Calu3 (cell line): ENCODE measurements at regions of chr16 and their contacts with region 1.

Region 1: GRCh38 chr16:69123910-69124309 is 8.5 kb downstream of the CHTF8 start:
- DNase-seq: peak; percentile 70
- H3K4me3 Mint-ChIP-seq: no peak overlapping the region
- H3K27ac Mint-ChIP-seq: no peak overlapping the region
- H3K4me1 Mint-ChIP-seq: no peaks in the 10 kb centered on the region
- H3K27me3 Mint-ChIP-seq: no peaks in the 10 kb centered on the region
- CTCF ChIP-seq: peak; percentile 83

Region 2: GRCh38 chr16:68528686-68529379 is 595.1 kb before region 1 on chr16:
- CTCF ChIA-PET with region 1: interaction called, 4 read pairs
- intact Hi-C with region 1: loop called (anchors 10 kb)
- DNase-seq: peak; percentile 91
- H3K4me3 Mint-ChIP-seq: peak overlapping the region; percentile 99
- H3K27ac Mint-ChIP-seq: peak overlapping the region; percentile 54
- H3K4me1 Mint-ChIP-seq: peaks cover 28% of the 10 kb centered on the region
- H3K27me3 Mint-ChIP-seq: no peaks in the 10 kb centered on the region
- CTCF ChIP-seq: peak; percentile 95

Region 3: GRCh38 chr16:68843482-68844210 is 280.3 kb before region 1 on chr16 and contains the start of gene TANGO6:
- CTCF ChIA-PET with region 1: interaction called, 9 read pairs
- intact Hi-C with region 1: loop called (anchors 1 kb)
- DNase-seq: peak; percentile 92
- H3K4me3 Mint-ChIP-seq: peak within 1 kb of the TSS; percentile 69
- H3K27ac Mint-ChIP-seq: peak within 1 kb of the TSS; percentile 27
- H3K4me1 Mint-ChIP-seq: peaks cover 8% of the 10 kb centered on the region
- H3K27me3 Mint-ChIP-seq: no peaks in the 10 kb centered on the region
- CTCF ChIP-seq: peak; percentile 21
- total RNA-seq, gene TANGO6: 18.0 TPM in 2 replicates

Region 4: GRCh38 chr16:68902008-68902968 is 221.6 kb before region 1 on chr16:
- CTCF ChIA-PET with region 1: interaction called, 5 read pairs
- intact Hi-C with region 1: loop called (anchors 1 kb)
- DNase-seq: peak; percentile 76
- H3K4me3 Mint-ChIP-seq: no peak overlapping the region
- H3K27ac Mint-ChIP-seq: no peak overlapping the region
- H3K4me1 Mint-ChIP-seq: peaks cover 10% of the 10 kb centered on the region
- H3K27me3 Mint-ChIP-seq: no peaks in the 10 kb centered on the region
- CTCF ChIP-seq: peak; percentile 82

Region 5: DNA sequence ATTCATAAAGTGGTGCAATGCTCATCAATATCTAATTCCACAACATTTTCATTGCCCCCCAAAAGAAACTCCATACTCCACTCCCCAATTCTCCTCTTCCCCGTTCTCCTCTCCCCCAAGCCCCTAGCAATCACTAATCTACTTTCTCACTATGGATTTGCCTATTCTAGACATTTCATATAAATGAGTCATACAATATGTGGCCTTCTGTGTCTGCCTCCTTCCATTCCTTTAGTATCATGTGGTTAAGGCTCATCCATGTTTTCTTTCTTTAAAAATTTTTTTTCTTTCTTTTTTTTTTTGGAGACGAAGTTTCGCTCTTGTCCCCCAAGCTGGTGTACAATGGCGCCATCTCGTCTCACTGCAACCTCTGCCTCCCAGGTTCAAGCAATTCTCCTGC is 74.8 kb before region 1 on chr16:
- CTCF ChIA-PET with region 1: interaction called, 10 read pairs
- intact Hi-C with region 1: no loop called
- DNase-seq: no peak
- H3K4me3 Mint-ChIP-seq: no peak overlapping the region
- H3K27ac Mint-ChIP-seq: peak overlapping the region; percentile 19
- H3K4me1 Mint-ChIP-seq: peaks cover 14% of the 10 kb centered on the region
- H3K27me3 Mint-ChIP-seq: no peaks in the 10 kb centered on the region
- CTCF ChIP-seq: no peak

Region 6: DNA sequence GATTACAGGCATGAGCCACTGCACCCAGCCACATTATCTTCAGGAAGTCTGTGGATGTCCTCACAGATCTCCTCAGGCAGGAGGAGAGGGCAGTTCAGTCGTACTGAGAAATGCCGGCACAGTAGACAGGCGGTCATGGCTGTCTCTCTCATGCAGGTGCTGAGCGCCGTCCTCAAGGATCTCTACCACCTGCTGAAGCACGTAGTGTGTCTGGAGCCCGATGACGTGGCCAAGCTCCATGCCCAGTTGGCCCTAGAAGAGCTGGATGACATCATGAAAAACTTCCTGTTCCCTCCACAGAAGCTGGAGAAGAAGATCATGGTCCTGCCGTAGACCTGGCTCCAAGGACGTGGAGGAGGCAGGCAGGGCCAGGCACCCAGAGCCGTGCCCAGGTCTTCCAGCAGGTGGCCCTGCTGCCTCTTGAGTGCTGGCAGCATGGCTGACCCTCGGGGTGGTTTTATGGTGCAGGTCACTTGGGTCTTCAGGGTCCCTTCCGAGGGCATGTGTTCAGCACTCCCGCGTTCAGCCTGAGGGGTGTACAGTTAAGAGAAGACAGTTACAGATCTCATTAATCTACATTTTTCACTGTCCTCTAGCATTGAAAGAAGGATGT is 40.5 kb before region 1 on chr16:
- CTCF ChIA-PET with region 1: no interaction called
- intact Hi-C with region 1: no loop called
- DNase-seq: no peak
- H3K4me3 Mint-ChIP-seq: no peak overlapping the region
- H3K27ac Mint-ChIP-seq: no peak overlapping the region
- H3K4me1 Mint-ChIP-seq: peaks cover 19% of the 10 kb centered on the region
- H3K27me3 Mint-ChIP-seq: no peaks in the 10 kb centered on the region
- CTCF ChIP-seq: no peak

Region 7: GRCh38 chr16:69100071-69100691 is 23.7 kb before region 1 on chr16:
- CTCF ChIA-PET with region 1: no interaction called
- intact Hi-C with region 1: no loop called
- DNase-seq: no peak
- H3K4me3 Mint-ChIP-seq: no peak overlapping the region
- H3K27ac Mint-ChIP-seq: no peak overlapping the region
- H3K4me1 Mint-ChIP-seq: peaks cover 15% of the 10 kb centered on the region
- H3K27me3 Mint-ChIP-seq: peaks cover 8% of the 10 kb centered on the region
- CTCF ChIP-seq: no peak